ENCODE measurements at regions of chr17 and their contacts with region 1.

Region 1: DNA sequence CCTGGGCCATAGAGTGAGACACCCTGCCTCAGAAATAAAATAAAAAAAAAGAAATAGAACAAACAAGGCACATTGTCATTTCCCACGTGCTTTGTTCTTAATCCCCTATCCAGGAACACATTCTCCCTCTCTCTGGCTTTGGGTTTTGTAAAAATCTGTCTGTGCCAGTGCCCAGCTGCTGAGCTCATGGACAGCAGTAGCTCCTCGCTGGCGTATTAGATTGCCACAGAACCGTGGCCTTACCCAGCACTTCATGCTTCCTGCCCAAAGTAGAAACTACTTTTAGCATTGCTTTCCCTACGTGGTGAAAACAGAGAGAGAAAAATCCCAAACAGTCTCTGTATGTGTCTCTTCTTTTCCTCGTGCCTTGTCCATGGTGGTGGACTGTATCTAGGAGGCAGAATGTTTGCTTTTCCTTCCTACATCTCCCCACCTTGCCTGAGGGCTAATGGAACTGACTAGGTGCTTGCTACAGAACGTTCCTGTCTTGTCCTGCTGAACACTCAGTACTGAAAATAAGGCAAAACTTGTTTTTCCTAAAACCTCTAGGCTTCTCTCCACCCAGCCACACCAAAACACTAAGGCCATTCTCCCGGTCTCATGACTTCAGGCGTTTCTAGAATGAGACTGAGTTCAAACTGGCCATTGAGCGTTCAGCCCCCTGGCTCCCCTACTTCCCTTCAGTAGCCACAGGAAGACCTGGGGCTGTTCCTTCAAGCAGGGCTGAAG is 26.1 kb downstream of the MNT start:
- DNase-seq: no peak
- H3K4me3 ChIP-seq: no peak overlapping the region
- H3K4me1 ChIP-seq: no peaks in the 10 kb centered on the region
- H3K27me3 ChIP-seq: no peaks in the 10 kb centered on the region

Region 2: GRCh38 chr17:2421315-2422147 is 46.8 kb after region 1 on chr17:
- in situ Hi-C with region 1: loop called (anchors 5 kb)
- DNase-seq: no peak
- H3K4me3 ChIP-seq: no peak overlapping the region
- H3K4me1 ChIP-seq: peaks cover 4% of the 10 kb centered on the region; the same call in 1 of the 2 replicates
- H3K27me3 ChIP-seq: no peaks in the 10 kb centered on the region

Measured in HAP-1 (cell line).